ENCODE measurements at regions of chr5 and their contacts with region 1.

Region 1: GRCh38 chr5:143824851-143825720 is 13.1 kb downstream of the HMHB1 start:
- DNase-seq: peak; percentile 77 to 85 (median 84)
- ATAC-seq: peak; percentile 65 to 98 (median 96)
- H3K4me3 ChIP-seq: no peak overlapping the region
- H3K27ac ChIP-seq: no peak overlapping the region
- H3K4me1 ChIP-seq: peaks cover 0 to 12% (median 3%) of the 10 kb centered on the region in 12 donors
- H3K27me3 ChIP-seq: no peaks in the 10 kb centered on the region
- CTCF ChIP-seq: peak; percentile 91 to 99 (median 96)
- POLR2A ChIP-seq: no peak

Region 2: GRCh38 chr5:142915813-142916424 is 909.2 kb before region 1 on chr5:
- intact Hi-C with region 1: loop called in 7 of 10 experiments (anchors 5 to 10 kb)
- DNase-seq: no peak
- ATAC-seq: peak in 3 of 4 donors; percentile 13 to 47 (median 44)
- H3K4me3 ChIP-seq: no peak overlapping the region
- H3K27ac ChIP-seq: no peak overlapping the region
- H3K4me1 ChIP-seq: peaks cover 0 to 11% (median 0%) of the 10 kb centered on the region in 12 donors
- H3K27me3 ChIP-seq: no peaks in the 10 kb centered on the region
- CTCF ChIP-seq: peak in 11 of 12 donors; percentile 11 to 55 (median 47)
- POLR2A ChIP-seq: no peak

Region 3: DNA sequence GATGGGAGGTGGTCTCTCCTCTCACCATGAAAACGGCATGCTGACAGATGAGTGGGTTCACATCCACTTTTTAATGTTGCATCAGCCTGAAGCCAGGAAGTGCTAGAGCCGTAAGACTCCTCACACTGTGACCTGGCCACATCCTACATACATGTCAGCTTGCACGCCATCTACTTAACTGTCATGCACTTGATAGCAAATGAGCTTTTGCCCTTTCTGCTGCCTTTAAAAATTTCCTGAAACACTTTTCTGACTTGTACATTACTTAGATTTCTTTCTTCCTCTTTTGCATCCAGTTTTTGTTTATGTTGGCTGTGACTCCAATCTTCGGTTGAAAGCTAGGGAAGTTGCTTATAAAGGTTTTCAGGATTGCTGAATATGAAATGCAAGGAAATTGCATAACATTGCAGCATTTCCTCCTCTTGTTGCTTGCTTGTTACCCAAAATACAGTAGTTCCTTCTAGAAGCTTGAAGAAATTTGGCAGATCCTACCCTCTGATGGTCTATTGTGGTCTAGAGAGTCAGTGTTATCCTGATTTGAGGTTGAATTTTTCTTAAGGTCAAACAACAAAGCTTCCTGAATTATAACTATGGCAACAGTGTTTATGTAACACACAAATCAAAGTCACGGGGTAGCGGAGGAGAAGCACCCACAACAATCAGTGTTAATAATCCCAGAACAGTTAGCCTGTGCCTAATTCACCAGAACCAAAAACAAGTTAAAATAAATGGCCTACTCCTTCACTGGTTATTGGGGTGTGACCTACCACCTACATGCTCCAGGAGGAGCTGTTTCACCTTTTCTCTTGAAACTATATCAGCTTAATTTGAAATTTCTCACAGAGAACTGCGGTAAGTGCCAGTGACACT is 822.4 kb before region 1 on chr5:
- intact Hi-C with region 1: loop called in 6 of 10 experiments (anchors 5 to 10 kb)
- DNase-seq: peak in 1 of 5 donors; percentile 41
- ATAC-seq: peak; percentile 66 to 87 (median 82)
- H3K4me3 ChIP-seq: peak overlapping the region in 2 of 12 donors; percentile 6 to 8
- H3K27ac ChIP-seq: peak overlapping the region; percentile 14 to 89 (median 74)
- H3K4me1 ChIP-seq: peaks cover 7 to 81% (median 55%) of the 10 kb centered on the region in 12 donors
- H3K27me3 ChIP-seq: no peaks in the 10 kb centered on the region
- CTCF ChIP-seq: peak; percentile 26 to 67 (median 50)
- POLR2A ChIP-seq: no peak

Region 4: GRCh38 chr5:143023411-143024096 is 801.5 kb before region 1 on chr5:
- intact Hi-C with region 1: loop called in 3 of 10 experiments (anchors 5 to 10 kb)
- DNase-seq: peak; percentile 63 to 89 (median 80)
- ATAC-seq: peak; percentile 95 to 97 (median 96)
- H3K4me3 ChIP-seq: no peak overlapping the region
- H3K27ac ChIP-seq: peak overlapping the region; percentile 34 to 83 (median 66)
- H3K4me1 ChIP-seq: peaks cover 0 to 51% (median 24%) of the 10 kb centered on the region in 12 donors
- H3K27me3 ChIP-seq: no peaks in the 10 kb centered on the region
- CTCF ChIP-seq: peak in 3 of 12 donors; percentile 11 to 30 (median 15)
- POLR2A ChIP-seq: no peak

Region 5: DNA sequence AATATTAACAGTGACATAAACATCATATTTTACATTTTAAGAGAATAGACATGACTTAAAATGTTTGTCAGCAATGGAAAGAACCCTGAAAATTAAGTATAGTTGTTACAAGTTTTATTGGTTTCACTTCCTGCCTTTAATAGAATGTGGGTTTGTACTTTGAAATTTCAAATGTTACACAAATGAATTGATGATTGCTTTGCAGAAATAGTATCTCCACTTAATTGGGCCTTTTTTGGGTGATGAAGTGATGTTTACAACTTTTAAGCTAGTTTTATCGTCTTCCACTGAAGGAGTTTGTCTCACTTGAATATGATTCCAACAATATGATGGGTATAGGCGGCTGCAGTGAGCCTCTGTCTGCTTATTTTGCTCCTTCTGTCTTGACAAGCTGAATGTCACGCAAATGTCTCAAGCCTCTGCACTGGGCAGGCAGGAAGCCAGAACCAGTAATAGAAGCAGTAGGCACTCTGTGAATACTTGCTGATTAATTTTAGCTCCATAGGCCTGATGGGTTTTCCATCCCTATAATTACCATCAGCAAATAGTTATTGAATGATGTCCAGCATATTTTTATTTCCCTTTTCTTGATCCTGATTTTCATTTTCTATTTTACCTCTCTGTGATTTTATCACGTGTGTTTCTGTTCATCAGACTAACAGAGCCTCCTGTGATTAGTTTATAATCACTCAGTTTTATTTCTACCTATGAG is 411.0 kb before region 1 on chr5:
- intact Hi-C with region 1: loop called in 5 of 10 experiments (anchors 5 kb)
- DNase-seq: peak in 3 of 5 donors; percentile 28 to 53 (median 44)
- ATAC-seq: peak; percentile 58 to 87 (median 76)
- H3K4me3 ChIP-seq: no peak overlapping the region
- H3K27ac ChIP-seq: peak overlapping the region in 6 of 12 donors; percentile 3 to 36 (median 23)
- H3K4me1 ChIP-seq: peaks cover 0 to 20% (median 7%) of the 10 kb centered on the region in 12 donors
- H3K27me3 ChIP-seq: no peaks in the 10 kb centered on the region
- CTCF ChIP-seq: no peak
- POLR2A ChIP-seq: no peak

Region 6: GRCh38 chr5:143506881-143507551 is 318.1 kb before region 1 on chr5:
- intact Hi-C with region 1: no loop called
- DNase-seq: no peak
- ATAC-seq: peak in 3 of 4 donors; percentile 82 to 90 (median 82)
- H3K4me3 ChIP-seq: no peak overlapping the region
- H3K27ac ChIP-seq: peak overlapping the region in 2 of 12 donors; percentile 19 to 31
- H3K4me1 ChIP-seq: peaks cover 0 to 24% (median 9%) of the 10 kb centered on the region in 12 donors
- H3K27me3 ChIP-seq: no peaks in the 10 kb centered on the region
- CTCF ChIP-seq: no peak
- POLR2A ChIP-seq: no peak

Region 7: DNA sequence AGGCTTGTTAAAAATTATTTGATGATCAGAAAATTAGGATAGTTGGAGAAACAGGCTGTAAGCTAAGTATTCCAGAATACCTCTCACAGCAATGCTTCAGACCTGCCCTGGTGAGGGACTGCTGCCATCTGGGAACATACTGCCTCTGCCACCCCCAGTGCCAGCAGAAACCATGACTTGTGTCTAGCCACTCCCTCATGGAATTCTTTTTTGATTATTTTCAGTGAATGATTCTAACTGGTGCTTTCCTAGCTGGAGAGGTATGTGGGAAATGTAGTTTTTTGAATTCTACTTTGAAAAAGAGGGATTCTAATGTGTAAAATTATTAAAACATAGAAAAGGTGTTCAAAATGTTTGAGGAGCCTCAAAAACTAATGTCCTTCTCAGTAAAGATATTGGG is 113.1 kb after region 1 on chr5:
- intact Hi-C with region 1: no loop called
- DNase-seq: no peak
- ATAC-seq: no peak
- H3K4me3 ChIP-seq: no peak overlapping the region
- H3K27ac ChIP-seq: no peak overlapping the region
- H3K4me1 ChIP-seq: no peaks in the 10 kb centered on the region
- H3K27me3 ChIP-seq: no peaks in the 10 kb centered on the region
- CTCF ChIP-seq: no peak
- POLR2A ChIP-seq: no peak

Region 8: DNA sequence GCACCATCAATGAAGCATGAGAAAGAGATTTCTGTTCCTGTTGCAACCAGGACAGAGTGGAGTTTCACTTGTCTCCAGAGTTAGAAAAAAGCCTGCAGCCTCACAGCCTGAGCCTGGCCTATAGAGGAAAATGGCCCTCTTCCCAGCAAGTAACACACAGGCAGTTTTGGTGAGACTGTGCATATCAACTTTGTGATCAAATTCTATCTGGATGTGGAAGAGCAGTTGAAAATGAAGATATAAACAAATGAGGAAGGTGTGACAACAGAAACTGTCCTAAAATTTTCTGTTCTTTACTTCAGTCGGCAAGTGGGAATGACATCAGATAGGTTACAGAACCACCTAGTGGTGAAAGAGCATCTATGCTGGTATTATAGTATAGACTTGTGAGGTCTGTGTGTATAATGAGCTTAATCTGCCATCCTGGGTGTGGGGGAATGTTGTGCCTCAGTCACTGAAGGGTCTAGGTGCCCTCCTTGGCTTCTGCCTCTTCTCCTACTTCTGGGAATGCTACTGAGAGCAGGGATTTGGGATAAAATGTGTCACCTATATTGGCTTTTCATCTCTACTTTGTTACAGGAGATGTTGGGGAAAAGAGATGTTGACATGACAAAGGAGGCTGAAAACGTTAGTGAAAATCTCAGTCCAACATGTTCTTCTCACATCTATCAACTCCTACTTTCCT is 317.2 kb after region 1 on chr5:
- intact Hi-C with region 1: loop called in 5 of 10 experiments (anchors 10 kb)
- DNase-seq: no peak
- ATAC-seq: peak; percentile 51 to 77 (median 62)
- H3K4me3 ChIP-seq: no peak overlapping the region
- H3K27ac ChIP-seq: no peak overlapping the region
- H3K4me1 ChIP-seq: peaks cover 0 to 34% (median 11%) of the 10 kb centered on the region in 12 donors
- H3K27me3 ChIP-seq: no peaks in the 10 kb centered on the region
- CTCF ChIP-seq: peak; percentile 36 to 78 (median 64)
- POLR2A ChIP-seq: no peak